ENCODE measurements at regions of chr10 and their contacts with region 1.

Region 1: DNA sequence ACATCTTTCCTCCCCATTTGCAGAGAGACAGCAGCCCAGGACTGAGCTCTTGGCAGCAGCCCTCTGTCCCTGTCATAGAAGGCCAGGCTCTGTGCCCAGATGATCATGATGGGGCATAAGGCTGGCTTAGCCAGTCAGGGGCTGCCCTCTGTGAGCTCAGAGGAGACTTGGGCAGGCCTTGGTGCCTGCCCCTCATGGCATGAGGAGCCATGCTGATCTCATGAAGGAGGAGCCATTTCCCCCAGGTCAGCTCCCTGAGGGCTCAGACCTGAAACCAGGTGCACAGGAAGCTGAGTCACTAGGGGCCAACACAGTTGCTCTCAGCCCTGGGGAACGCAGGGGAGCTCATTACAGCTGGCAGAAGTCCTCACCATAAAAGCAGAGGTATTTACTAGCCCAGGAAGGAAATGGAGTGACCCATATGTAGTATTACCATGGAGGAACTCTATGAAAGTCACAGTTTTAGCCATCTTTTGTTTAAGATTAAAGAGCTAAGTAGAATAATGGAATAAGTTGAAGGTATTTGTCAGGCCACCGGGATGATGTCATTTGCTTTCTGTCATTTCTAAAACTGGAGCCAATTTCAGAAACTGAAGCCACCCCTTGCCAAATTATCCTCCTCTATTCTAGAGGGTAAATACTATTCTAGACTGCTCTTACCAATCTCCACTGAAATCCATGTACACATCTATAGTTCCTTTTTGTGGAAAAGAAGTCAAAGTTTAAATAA is 362.4 kb upstream of the ZNF32 start:
- DNase-seq: peak; percentile 80
- ATAC-seq: peak; percentile 88
- H3K4me3 ChIP-seq: no peak overlapping the region
- H3K27ac ChIP-seq: peak overlapping the region; percentile 81
- H3K4me1 ChIP-seq: peaks cover 31% of the 10 kb centered on the region
- H3K27me3 ChIP-seq: no peaks in the 10 kb centered on the region; a peak in 1 of 4 replicates
- CTCF ChIP-seq: no peak
- EP300 ChIP-seq: peak in 1 of 2 experiments; percentile 14; a peak in 1 of 4 replicates
- POLR2A ChIP-seq: peak; percentile 61
- RAD21 ChIP-seq: no peak

Region 2: DNA sequence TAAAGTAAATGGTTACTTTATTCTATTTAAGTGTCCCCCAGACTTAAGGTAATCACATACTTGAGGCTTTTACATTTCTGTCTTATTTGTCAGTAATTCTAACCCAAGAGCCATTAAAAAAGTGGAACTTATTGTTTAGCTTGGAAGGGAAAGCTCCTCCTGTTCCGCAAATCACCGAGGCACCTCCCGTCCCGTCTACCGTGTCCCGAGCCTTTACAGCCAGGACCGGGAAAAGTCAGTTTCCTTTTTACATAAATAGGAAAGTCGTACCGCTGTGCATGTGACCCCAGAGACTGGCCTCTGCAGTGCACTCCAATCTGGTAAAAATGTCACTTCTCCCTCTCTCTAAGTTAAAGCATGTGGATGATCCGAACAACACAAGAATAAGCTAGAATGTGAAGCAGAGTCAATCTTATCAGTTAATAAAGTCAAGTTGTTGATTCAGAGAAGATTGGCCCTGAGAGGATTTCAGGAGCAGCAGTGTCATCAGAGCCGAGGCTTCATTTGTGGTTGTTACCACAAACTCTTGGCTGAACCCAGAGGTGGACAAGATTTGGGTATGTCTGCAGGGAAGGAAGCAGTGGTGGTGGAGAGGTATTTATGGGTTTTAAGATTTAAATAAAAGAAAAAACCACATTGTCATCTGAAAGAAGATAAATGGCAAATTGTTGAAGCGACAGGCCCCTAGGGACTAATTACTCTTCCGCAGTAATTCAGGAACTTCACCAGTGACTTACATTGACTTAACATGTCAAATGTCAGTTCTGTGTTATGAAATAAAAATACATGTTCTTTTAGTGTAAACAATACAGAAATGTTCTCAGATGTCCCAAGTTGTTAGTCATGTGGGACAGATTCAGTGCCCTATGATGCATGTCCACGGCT is 45.8 kb before region 1 on chr10:
- CTCF ChIA-PET with region 1: interaction called, 3 read pairs
- POLR2A ChIA-PET with region 1: interaction called, 3 read pairs
- RAD21 ChIA-PET with region 1: interaction called, 13 read pairs
- SMC1A ChIA-PET with region 1: interaction called, 22 read pairs
- in situ Hi-C with region 1: no loop called
- intact Hi-C with region 1: no loop called
- DNase-seq: peak; percentile 74
- ATAC-seq: peak; percentile 55
- H3K4me3 ChIP-seq: no peak overlapping the region
- H3K27ac ChIP-seq: no peak overlapping the region
- H3K4me1 ChIP-seq: peaks cover 4% of the 10 kb centered on the region; the same call in 1 of the 2 replicates
- H3K27me3 ChIP-seq: no peaks in the 10 kb centered on the region; a peak in 1 of 4 replicates
- CTCF ChIP-seq: no peak
- EP300 ChIP-seq: peak; percentile 38 to 58; a peak in 2 of 4 replicates
- POLR2A ChIP-seq: no peak
- RAD21 ChIP-seq: no peak

Region 3: GRCh38 chr10:43998021-43998809 is 12.8 kb before region 1 on chr10:
- CTCF ChIA-PET with region 1: interaction called, 5 read pairs
- POLR2A ChIA-PET with region 1: no interaction called
- RAD21 ChIA-PET with region 1: interaction called, 8 read pairs
- SMC1A ChIA-PET with region 1: interaction called, 18 read pairs
- in situ Hi-C with region 1: no loop called
- intact Hi-C with region 1: no loop called
- DNase-seq: no peak
- ATAC-seq: no peak
- H3K4me3 ChIP-seq: no peak overlapping the region
- H3K27ac ChIP-seq: no peak overlapping the region
- H3K4me1 ChIP-seq: no peaks in the 10 kb centered on the region
- H3K27me3 ChIP-seq: no peaks in the 10 kb centered on the region
- CTCF ChIP-seq: no peak
- EP300 ChIP-seq: no peak
- POLR2A ChIP-seq: no peak
- RAD21 ChIP-seq: no peak

Region 4: DNA sequence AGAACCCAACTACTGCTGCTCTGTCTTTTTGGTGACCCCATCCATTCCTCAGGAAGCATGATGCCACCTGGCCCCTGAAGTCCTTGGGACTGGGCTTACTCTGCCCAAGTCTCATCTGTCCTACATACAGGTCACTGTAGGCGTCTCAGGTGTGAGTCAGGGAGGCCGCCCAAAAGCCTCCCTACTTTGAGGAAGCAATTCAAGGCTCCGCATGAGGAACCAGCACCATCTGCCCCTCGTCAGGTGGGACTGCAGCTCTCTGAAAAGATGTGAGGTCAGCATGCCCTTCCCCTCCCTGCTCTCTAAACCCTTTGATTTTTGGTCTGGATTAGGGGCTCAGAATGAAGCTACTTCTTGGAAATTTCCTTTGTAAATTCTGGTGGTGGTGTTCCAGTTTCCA is 19.1 kb after region 1 on chr10:
- CTCF ChIA-PET with region 1: interaction called, 17 read pairs
- POLR2A ChIA-PET with region 1: interaction called, 7 read pairs
- RAD21 ChIA-PET with region 1: interaction called, 61 read pairs
- SMC1A ChIA-PET with region 1: interaction called, 40 read pairs
- in situ Hi-C with region 1: no loop called
- intact Hi-C with region 1: no loop called
- DNase-seq: no peak
- ATAC-seq: peak; percentile 90
- H3K4me3 ChIP-seq: no peak overlapping the region
- H3K27ac ChIP-seq: no peak overlapping the region
- H3K4me1 ChIP-seq: no peaks in the 10 kb centered on the region
- H3K27me3 ChIP-seq: no peaks in the 10 kb centered on the region
- CTCF ChIP-seq: peak; percentile 65 to 78 (median 71); a peak in 5 of 6 replicates
- EP300 ChIP-seq: no peak
- POLR2A ChIP-seq: no peak
- RAD21 ChIP-seq: peak; percentile 98

Region 5: DNA sequence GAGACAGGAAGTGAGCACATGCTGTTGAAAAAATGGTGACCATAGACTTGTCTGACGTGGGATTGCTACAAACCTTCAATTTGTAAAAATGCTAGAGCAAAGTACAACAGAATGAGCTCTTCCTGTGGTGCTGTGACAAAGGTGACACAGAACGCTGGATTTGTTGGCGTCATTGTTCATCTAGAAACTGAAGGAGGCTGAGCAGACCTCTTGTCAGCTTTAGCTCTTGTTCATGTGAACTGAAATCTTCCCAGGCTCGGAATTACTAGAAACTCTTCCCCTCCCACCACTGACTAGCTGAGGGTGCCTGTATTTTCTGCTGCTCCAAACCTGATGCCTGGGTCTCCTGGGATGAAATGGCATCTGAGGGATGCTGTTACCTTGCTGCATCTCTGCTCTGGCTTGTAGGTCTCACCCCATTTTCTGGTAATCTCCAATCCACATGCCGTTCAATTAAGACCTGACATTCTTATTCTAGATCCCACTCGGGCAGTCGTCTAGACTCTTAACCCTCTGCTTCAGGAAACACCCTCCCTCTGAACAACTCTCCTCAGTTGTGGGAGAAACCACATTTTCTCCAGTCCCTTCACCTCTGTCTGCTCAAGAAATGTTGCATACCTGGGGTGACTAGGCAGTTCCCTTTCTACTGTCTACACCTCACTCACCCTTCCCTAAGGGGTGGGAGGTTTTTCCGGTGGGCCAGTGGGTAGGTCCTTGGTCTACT is 24.6 kb after region 1 on chr10:
- CTCF ChIA-PET with region 1: interaction called, 17 read pairs
- POLR2A ChIA-PET with region 1: interaction called, 7 read pairs
- RAD21 ChIA-PET with region 1: interaction called, 61 read pairs
- SMC1A ChIA-PET with region 1: interaction called, 40 read pairs
- in situ Hi-C with region 1: no loop called
- intact Hi-C with region 1: no loop called
- DNase-seq: peak; percentile 57
- ATAC-seq: peak; percentile 68
- H3K4me3 ChIP-seq: no peak overlapping the region
- H3K27ac ChIP-seq: no peak overlapping the region
- H3K4me1 ChIP-seq: 0 out of 2 replicates have a peak, but pooled peaks cover 3% of the 10 kb centered on the region
- H3K27me3 ChIP-seq: no peaks in the 10 kb centered on the region
- CTCF ChIP-seq: no peak
- EP300 ChIP-seq: no peak
- POLR2A ChIP-seq: no peak
- RAD21 ChIP-seq: no peak

Region 6: DNA sequence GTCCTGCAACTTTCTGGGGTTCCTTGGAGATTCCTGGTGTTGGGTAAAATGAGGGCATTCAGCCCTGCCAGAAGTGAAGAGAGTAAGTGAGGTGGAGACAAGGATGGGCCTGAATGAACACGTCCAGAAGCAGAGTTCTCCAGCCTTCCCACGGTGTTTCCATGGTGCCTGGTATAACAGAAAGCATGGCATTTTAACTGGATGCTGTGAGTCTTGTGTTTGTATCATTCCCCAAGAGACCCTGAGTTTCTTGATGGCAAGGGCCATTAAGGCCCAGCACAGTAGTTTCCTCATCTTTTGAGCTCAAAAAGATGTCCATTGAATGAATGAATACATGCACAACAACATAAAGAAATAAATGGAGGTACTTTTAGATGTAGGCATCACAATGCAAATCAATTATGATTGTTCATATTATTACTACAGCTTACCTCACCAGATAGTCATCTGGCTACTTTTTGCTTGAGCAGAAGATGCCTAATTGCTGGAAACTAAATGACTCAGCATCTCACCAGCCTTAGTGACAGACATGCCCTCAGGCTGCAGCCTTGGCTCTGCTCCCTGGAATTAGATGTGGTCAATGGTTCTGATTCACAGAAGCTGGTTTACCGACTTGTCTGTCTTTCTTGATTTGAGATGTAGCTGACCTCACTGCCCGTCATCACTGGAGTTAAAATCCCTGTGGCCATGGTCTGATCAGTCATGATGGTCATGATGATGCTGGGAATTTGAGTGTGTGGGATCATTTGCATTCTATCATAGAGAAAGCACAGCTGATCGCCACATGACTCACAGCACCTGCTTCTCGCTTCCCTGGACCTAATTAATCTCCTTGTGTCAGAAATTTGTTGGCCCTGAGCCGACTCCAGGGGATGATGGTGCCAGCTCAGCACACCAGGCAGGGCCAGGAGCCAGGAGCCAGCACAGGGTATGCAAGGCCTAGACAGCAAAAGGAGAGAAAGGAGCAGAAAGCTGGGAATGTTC is 289.9 kb after region 1 on chr10:
- CTCF ChIA-PET with region 1: no interaction called
- POLR2A ChIA-PET with region 1: no interaction called
- RAD21 ChIA-PET with region 1: no interaction called
- SMC1A ChIA-PET with region 1: no interaction called
- in situ Hi-C with region 1: loop called (anchors 5 kb)
- intact Hi-C with region 1: loop called (anchors 10 kb)
- DNase-seq: peak; percentile 79
- ATAC-seq: peak; percentile 92
- H3K4me3 ChIP-seq: no peak overlapping the region
- H3K27ac ChIP-seq: no peak overlapping the region
- H3K4me1 ChIP-seq: peaks cover 3% of the 10 kb centered on the region; the same call in 1 of the 2 replicates
- H3K27me3 ChIP-seq: no peaks in the 10 kb centered on the region
- CTCF ChIP-seq: no peak
- EP300 ChIP-seq: peak; percentile 57 to 82; a peak in 3 of 4 replicates
- POLR2A ChIP-seq: no peak
- RAD21 ChIP-seq: no peak

Region 7: GRCh38 chr10:44310762-44311562 is 299.9 kb after region 1 on chr10:
- CTCF ChIA-PET with region 1: no interaction called
- POLR2A ChIA-PET with region 1: no interaction called
- RAD21 ChIA-PET with region 1: no interaction called
- SMC1A ChIA-PET with region 1: no interaction called
- in situ Hi-C with region 1: loop called (anchors 5 kb)
- intact Hi-C with region 1: loop called (anchors 10 kb)
- DNase-seq: no peak
- ATAC-seq: peak; percentile 88
- H3K4me3 ChIP-seq: no peak overlapping the region; the same call in 1 of the 2 replicates
- H3K27ac ChIP-seq: no peak overlapping the region
- H3K4me1 ChIP-seq: peaks cover 29% of the 10 kb centered on the region
- H3K27me3 ChIP-seq: no peaks in the 10 kb centered on the region
- CTCF ChIP-seq: peak; percentile 65 to 84 (median 66); a peak in 5 of 6 replicates
- EP300 ChIP-seq: no peak
- POLR2A ChIP-seq: peak; percentile 51; the same call in 1 of the 2 replicates
- RAD21 ChIP-seq: peak; percentile 49

Region 8: GRCh38 chr10:44422570-44423101 is 411.6 kb after region 1 on chr10:
- CTCF ChIA-PET with region 1: no interaction called
- POLR2A ChIA-PET with region 1: no interaction called
- RAD21 ChIA-PET with region 1: no interaction called
- SMC1A ChIA-PET with region 1: no interaction called
- in situ Hi-C with region 1: no loop called
- intact Hi-C with region 1: no loop called
- DNase-seq: no peak
- ATAC-seq: no peak
- H3K4me3 ChIP-seq: no peak overlapping the region
- H3K27ac ChIP-seq: no peak overlapping the region
- H3K4me1 ChIP-seq: no peaks in the 10 kb centered on the region
- H3K27me3 ChIP-seq: no peaks in the 10 kb centered on the region
- CTCF ChIP-seq: no peak
- EP300 ChIP-seq: no peak
- POLR2A ChIP-seq: no peak
- RAD21 ChIP-seq: no peak

Measured in GM12878 (cell line).